HEK293 (cell line): ENCODE measurements at regions of chr6 and their contacts with region 1.

Region 1: DNA sequence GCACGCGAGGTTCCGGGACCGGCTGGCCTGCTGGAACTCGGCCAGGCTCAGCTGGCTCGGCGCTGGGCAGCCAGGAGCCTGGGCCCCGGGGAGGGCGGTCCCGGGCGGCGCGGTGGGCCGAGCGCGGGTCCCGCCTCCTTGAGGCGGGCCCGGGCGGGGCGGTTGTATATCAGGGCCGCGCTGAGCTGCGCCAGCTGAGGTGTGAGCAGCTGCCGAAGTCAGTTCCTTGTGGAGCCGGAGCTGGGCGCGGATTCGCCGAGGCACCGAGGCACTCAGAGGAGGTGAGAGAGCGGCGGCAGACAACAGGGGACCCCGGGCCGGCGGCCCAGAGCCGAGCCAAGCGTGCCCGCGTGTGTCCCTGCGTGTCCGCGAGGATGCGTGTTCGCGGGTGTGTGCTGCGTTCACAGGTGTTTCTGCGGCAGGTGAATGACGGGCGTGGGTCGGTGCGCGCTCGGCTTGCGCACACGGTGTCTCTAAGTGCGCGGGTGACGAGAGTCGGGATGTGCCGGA is at the start of gene CDKN1A:
- H3K4me3 ChIP-seq: peak within 1 kb of the TSS; percentile 76
- H3K27ac ChIP-seq: peak within 1 kb of the TSS; percentile 89
- H3K4me1 ChIP-seq: peaks cover 19% of the 10 kb centered on the region
- CTCF ChIP-seq: 0 out of 2 replicates have a peak, but pooled peaks have one; percentile 7

Region 2: GRCh38 chr6:36038120-36038876 is 640.3 kb before region 1 on chr6:
- CTCF ChIA-PET with region 1: no interaction called
- POLR2A ChIA-PET with region 1: no interaction called
- H3K4me3 ChIP-seq: no peak overlapping the region
- H3K27ac ChIP-seq: no peak overlapping the region
- H3K4me1 ChIP-seq: peaks cover 29% of the 10 kb centered on the region
- CTCF ChIP-seq: no peak

Region 3: GRCh38 chr6:36623547-36624459 is 54.8 kb before region 1 on chr6:
- CTCF ChIA-PET with region 1: interaction called, 47 read pairs
- POLR2A ChIA-PET with region 1: interaction called, 19 read pairs
- H3K4me3 ChIP-seq: no peak overlapping the region
- H3K27ac ChIP-seq: no peak overlapping the region
- H3K4me1 ChIP-seq: no peaks in the 10 kb centered on the region; the same call in 1 of the 2 replicates
- CTCF ChIP-seq: peak; percentile 92

Region 4: GRCh38 chr6:36650848-36651478 is 27.6 kb before region 1 on chr6:
- CTCF ChIA-PET with region 1: interaction called, 4 read pairs
- POLR2A ChIA-PET with region 1: interaction called, 16 read pairs
- H3K4me3 ChIP-seq: no peak overlapping the region
- H3K27ac ChIP-seq: no peak overlapping the region; the same call in 1 of the 2 replicates
- H3K4me1 ChIP-seq: peaks cover 24% of the 10 kb centered on the region
- CTCF ChIP-seq: no peak

Region 5: GRCh38 chr6:36691612-36692011 is 13.0 kb after region 1 on chr6:
- CTCF ChIA-PET with region 1: interaction called, 4 read pairs
- POLR2A ChIA-PET with region 1: interaction called, 11 read pairs
- H3K4me3 ChIP-seq: no peak overlapping the region
- H3K27ac ChIP-seq: no peak overlapping the region
- H3K4me1 ChIP-seq: no peaks in the 10 kb centered on the region
- CTCF ChIP-seq: no peak

Region 6: DNA sequence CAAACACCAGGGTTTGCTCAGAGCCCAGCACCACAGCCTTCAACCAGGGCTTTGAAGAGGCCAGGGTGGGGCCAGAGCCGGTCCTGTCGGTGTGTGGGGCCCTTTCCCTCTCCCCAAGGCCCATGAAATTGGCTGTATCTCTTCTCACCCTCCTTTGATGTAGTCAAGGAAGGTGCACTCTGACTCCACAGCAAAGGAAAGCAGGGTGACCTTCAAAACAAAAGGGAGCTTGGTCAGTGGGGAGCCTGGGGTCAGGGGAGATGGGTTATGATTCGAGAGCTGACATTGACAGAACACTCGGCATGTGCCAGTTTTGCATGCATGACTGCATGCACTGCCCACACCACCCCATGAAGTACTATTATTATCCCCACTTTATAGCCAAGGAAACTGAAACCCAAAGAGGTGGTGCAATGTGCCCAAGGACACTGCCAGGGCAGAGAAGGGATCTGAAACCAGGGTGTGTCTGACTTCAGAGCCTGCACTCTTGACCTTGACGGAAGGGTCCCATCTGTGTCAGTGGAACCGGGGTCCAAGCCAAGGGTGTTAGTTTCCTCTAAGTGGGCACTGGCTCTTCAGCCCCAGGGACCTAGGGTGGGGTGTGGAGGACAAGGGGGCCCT is 74.4 kb after region 1 on chr6:
- CTCF ChIA-PET with region 1: interaction called, 14 read pairs
- POLR2A ChIA-PET with region 1: interaction called, 12 read pairs
- H3K4me3 ChIP-seq: no peak overlapping the region
- H3K27ac ChIP-seq: 0 out of 2 replicates have a peak overlapping the region, but pooled peaks have one; percentile 6
- H3K4me1 ChIP-seq: no peaks in the 10 kb centered on the region; the same call in 1 of the 2 replicates
- CTCF ChIP-seq: no peak

Region 7: GRCh38 chr6:36907781-36908180 is 229.2 kb after region 1 on chr6:
- CTCF ChIA-PET with region 1: no interaction called
- POLR2A ChIA-PET with region 1: no interaction called
- H3K4me3 ChIP-seq: no peak overlapping the region
- H3K27ac ChIP-seq: no peak overlapping the region
- H3K4me1 ChIP-seq: no peaks in the 10 kb centered on the region
- CTCF ChIP-seq: no peak